ENCODE measurements at regions of chr12 and their contacts with region 1.

Region 1: GRCh38 chr12:122225683-122226407 is at the start of gene DIABLO:
- DNase-seq: peak; percentile 100
- ATAC-seq: peak; percentile 94
- H3K4me3 Mint-ChIP-seq: peak within 1 kb of the TSS; percentile 89
- H3K27ac Mint-ChIP-seq: peak within 1 kb of the TSS; percentile 93
- H3K4me1 Mint-ChIP-seq: peaks cover 35% of the 10 kb centered on the region
- H3K27me3 Mint-ChIP-seq: no peaks in the 10 kb centered on the region
- total RNA-seq, gene DIABLO: 44.4 to 45.5 TPM

Region 2: GRCh38 chr12:122244565-122245371 is 18.9 kb after region 1 on chr12:
- POLR2A ChIA-PET with region 1: interaction called, 10 read pairs
- DNase-seq: no peak
- ATAC-seq: peak; percentile 60
- H3K4me3 Mint-ChIP-seq: peak overlapping the region; percentile 61
- H3K27ac Mint-ChIP-seq: peak overlapping the region; percentile 81
- H3K4me1 Mint-ChIP-seq: peaks cover 14% of the 10 kb centered on the region
- H3K27me3 Mint-ChIP-seq: no peaks in the 10 kb centered on the region

Region 3: DNA sequence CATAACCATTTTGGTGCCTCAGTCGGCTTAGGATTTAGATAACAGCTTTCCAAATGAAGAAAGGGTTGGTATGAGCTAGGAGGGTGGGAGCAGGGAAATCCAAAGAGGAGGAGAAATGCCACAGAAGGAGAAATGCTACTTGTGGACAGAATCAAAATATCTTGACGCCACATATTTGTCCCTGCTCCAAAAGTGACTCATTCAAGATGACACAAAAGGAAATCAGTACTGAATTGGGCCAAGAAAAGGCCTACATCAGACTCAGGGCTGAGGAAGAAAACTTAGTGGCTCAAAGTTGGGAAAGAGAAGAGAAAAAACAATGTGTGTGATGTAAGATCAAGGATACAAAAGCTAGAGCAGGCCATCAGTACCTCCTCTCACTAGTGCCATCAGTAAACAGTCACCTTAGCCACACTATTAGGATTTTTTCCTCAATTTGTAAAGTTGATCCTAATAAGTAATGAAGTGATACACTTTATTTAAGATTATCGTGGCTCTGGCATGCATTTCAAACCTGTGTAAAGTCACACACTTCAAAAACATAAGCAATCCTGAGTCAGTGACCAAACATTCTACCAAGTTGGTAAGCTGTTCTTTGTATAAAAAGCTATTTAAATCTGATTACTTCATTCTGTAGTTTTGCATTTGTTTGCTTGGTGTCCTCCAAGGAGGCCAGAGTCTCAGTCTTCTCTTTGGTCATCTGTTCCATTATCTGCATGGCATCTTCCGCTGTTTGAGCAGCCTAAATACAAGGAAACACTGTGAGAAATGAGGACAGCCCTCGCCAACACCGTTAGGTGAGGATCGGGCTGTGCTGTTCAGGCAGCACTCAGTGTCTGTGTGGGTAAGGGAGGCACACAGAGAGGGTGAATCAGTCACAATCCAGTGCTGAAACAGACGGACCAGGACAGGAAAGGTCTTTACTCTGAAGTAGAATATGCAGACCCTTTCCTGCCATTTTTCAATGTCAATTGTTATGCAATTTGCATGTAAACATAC is 93.1 kb after region 1 on chr12:
- POLR2A ChIA-PET with region 1: no interaction called
- DNase-seq: no peak
- ATAC-seq: no peak
- H3K4me3 Mint-ChIP-seq: no peak overlapping the region
- H3K27ac Mint-ChIP-seq: no peak overlapping the region
- H3K4me1 Mint-ChIP-seq: peaks cover 4% of the 10 kb centered on the region
- H3K27me3 Mint-ChIP-seq: no peaks in the 10 kb centered on the region